ENCODE measurements at regions of chr16 and their contacts with region 1.

Region 1: DNA sequence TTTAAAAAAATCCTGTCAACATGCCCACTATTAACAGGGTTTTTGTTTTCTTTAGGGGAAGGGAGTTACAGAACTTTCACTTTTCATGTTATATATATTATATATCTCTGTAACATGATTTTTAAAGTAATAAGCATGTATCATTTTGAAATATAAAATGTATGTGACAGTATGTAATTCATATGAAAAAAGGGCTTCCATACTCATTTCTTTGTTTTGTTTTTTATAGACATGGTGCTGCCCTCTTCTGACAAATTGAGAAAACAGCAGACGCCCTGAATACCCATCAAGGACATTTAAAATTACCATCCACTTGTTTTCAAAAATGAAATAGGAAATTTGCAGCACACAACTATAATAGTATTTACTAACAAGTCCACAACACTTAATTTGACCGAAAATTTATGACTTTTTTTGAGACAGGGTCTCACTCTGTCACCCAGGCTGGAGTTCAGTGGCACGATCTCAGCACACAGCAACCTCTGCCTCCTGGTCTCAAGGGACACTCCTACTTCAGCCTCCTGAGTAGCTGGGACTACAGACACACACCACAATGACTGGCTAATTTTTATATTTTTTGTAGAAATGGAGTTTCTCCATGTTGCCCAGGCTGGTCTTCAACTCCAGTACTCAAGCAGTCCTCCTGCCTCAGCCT is 30.4 kb downstream of the CFDP1 start:
- DNase-seq: no peak
- H3K4me3 Mint-ChIP-seq: no peak overlapping the region
- H3K27ac Mint-ChIP-seq: peak overlapping the region; percentile 15
- H3K4me1 Mint-ChIP-seq: peaks cover 12% of the 10 kb centered on the region
- H3K27me3 Mint-ChIP-seq: no peaks in the 10 kb centered on the region

Region 2: DNA sequence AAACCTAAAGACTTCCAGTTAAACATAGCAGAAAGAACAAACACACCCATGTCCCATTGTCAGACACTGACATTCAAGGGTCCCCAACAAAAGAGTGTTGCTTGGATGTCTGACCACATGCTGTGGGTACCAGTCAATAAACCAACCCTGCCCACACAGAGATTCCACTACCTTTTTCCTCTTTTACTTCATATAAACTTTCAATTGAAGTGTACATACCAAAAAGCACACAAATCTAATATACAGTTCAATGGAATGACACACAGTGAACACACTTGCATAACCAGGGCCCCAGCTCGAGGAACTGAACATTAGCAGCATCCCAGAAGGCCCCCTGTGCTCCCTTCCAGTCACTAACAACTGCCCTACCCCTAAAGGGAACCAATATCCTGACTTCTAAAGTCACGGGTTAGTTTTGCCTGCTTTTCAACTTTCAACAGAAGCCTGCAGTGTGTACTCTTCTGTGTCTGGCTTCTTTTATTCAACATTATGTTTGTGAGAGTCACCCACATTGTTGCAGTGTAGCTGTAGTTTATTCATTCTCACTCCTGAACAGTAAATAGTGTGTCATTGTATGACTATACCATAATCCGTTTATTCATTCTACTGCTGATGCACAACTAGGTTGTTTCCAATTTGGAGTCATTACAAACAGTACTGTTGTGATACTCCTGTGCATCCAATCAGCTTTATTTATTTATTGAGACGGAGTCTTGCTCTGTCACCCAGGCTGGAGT is 12.4 kb after region 1 on chr16:
- intact Hi-C with region 1: loop called (anchors 1 kb)
- DNase-seq: no peak
- H3K4me3 Mint-ChIP-seq: no peak overlapping the region
- H3K27ac Mint-ChIP-seq: no peak overlapping the region
- H3K4me1 Mint-ChIP-seq: peaks cover 18% of the 10 kb centered on the region
- H3K27me3 Mint-ChIP-seq: no peaks in the 10 kb centered on the region